Naive thymus-derived CD4-positive, alpha-beta T cell (primary cell): ENCODE measurements at regions of chr3 and their contacts with region 1.

Region 1: DNA sequence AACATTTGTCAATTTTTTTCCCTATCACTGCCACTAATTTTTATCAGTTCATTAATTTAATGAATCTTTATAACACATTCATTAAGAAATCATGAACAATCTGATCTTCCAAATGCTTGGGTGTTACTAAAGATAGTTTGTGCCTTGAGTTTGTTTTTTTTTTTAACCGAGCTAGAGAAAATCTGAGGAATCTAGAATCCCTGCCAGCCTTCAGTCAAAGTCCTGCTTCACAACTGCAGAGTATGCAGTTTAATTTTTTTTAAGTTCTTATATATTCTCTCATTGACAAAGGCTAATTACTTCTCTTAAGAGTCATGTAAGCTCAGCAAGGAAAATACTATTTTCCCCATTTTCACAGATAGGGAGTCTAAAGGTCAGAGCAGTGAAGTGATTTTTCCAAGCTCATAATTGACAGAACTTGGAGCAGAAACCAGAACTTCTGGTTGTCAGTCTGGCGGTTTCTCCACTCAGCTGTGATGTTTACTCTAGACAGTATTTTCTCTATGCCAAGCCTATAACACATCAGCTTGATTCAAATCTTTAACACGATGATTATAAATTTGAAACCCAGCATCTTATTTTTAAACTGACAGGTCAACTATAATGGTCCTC is 55.7 kb downstream of the TNIK start:
- DNase-seq: no peak
- ATAC-seq: no peak
- H3K4me3 ChIP-seq: no peak overlapping the region
- H3K4me3 Mint-ChIP-seq: no peak overlapping the region
- H3K27ac ChIP-seq: no peak overlapping the region
- H3K27ac Mint-ChIP-seq: no peak overlapping the region
- H3K4me1 ChIP-seq: peaks cover 9% of the 10 kb centered on the region in 2 donors
- H3K4me1 Mint-ChIP-seq: peaks cover 18 to 98% (median 83%) of the 10 kb centered on the region in 7 donors
- H3K27me3 ChIP-seq: no peaks in the 10 kb centered on the region
- H3K27me3 Mint-ChIP-seq: no peaks in the 10 kb centered on the region

Region 2: DNA sequence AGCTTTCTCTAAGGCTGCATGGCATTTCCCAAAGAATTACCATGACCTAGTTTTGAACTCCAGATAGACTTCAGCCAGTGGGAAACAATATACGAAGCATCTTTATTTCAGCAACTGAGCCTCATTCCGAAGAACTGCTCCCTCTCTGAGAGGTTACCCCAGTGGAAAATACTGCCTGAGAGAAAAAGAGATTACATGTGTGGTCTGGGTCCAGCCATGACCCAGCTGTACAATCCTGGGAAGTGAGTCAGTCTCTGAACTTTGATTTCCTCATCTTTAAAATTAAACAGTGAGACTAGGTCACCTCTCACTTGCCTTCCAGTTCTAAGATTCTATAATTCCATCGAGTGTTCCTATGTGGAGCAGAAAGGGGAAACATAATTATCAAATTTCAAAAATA is 13.3 kb after region 1 on chr3:
- CTCF ChIA-PET with region 1: interaction called, 3 read pairs
- POLR2A ChIA-PET with region 1: interaction called, 3 read pairs
- intact Hi-C with region 1: loop called in 1 of 2 experiments (anchors 2 kb)
- DNase-seq: no peak
- ATAC-seq: no peak
- H3K4me3 ChIP-seq: no peak overlapping the region
- H3K4me3 Mint-ChIP-seq: peak overlapping the region in 1 of 10 donors; percentile 6
- H3K27ac ChIP-seq: no peak overlapping the region
- H3K27ac Mint-ChIP-seq: peak overlapping the region in 1 of 9 donors; percentile 48
- H3K4me1 ChIP-seq: peaks cover 0 to 15% of the 10 kb centered on the region in 2 donors
- H3K4me1 Mint-ChIP-seq: peaks cover 14 to 86% (median 82%) of the 10 kb centered on the region in 7 donors
- H3K27me3 ChIP-seq: no peaks in the 10 kb centered on the region
- H3K27me3 Mint-ChIP-seq: no peaks in the 10 kb centered on the region

Region 3: DNA sequence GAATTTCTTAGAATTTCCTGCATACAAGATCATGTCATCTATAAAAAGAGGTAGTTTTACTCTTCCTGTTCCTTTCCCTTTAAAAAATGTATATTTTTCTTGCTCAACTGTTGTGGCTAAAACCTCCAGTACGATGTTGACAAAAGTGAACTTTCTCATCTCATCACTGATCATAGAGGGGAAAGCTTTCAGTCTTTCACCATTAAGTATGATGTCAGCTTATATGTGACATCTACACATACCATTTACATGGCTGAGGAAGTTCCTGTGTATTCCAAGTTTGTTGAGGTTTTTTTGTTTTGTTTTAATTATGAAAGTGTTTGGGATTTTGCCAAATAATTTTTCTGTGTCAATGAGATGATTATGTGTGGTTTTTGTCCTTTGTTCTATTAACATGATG is 232.2 kb after region 1 on chr3:
- CTCF ChIA-PET with region 1: no interaction called
- POLR2A ChIA-PET with region 1: no interaction called
- intact Hi-C with region 1: no loop called
- DNase-seq: no peak
- ATAC-seq: peak; percentile 47
- H3K4me3 ChIP-seq: no peak overlapping the region
- H3K4me3 Mint-ChIP-seq: no peak overlapping the region
- H3K27ac ChIP-seq: no peak overlapping the region
- H3K27ac Mint-ChIP-seq: no peak overlapping the region
- H3K4me1 ChIP-seq: no peaks in the 10 kb centered on the region
- H3K4me1 Mint-ChIP-seq: no peaks in the 10 kb centered on the region
- H3K27me3 ChIP-seq: no peaks in the 10 kb centered on the region
- H3K27me3 Mint-ChIP-seq: peaks cover 0 to 4% (median 0%) of the 10 kb centered on the region in 5 donors